B cell (primary cell): ENCODE measurements at regions of chr10 and their contacts with region 1.

Region 1: DNA sequence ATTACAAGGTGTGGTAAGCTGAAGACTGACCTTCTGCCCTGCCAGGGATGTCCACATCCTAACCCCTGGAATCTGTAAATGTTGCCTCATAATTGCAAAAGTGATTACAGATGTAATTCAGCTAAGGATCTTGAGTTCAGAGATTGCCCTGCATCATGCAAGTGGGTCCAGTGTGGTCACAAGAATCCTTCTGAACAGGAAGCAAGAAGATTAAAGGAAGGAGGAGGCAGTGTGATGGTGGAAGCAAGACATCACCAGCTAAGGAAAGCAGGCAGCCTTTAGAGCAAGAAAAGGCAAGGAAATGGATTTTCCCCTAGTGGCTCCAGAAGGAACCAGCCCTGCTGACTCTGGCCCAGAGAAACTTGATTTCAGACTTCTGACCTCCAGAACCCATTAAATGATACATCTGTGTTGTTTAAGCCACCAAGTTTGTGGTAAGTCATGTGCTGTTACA is 78.1 kb downstream of the USP6NL start:
- DNase-seq: peak; percentile 37
- ATAC-seq: no peak
- H3K4me3 ChIP-seq: no peak overlapping the region
- H3K4me3 Mint-ChIP-seq: peak overlapping the region; percentile 80
- H3K27ac ChIP-seq: peak overlapping the region; percentile 14 to 68
- H3K27ac Mint-ChIP-seq: peak overlapping the region; percentile 94
- H3K4me1 ChIP-seq: peaks cover 62 to 66% of the 10 kb centered on the region in 2 donors
- H3K4me1 Mint-ChIP-seq: peaks cover 89% of the 10 kb centered on the region
- H3K27me3 ChIP-seq: no peaks in the 10 kb centered on the region
- H3K27me3 Mint-ChIP-seq: no peaks in the 10 kb centered on the region
- CTCF ChIP-seq: peak; percentile 22

Region 2: DNA sequence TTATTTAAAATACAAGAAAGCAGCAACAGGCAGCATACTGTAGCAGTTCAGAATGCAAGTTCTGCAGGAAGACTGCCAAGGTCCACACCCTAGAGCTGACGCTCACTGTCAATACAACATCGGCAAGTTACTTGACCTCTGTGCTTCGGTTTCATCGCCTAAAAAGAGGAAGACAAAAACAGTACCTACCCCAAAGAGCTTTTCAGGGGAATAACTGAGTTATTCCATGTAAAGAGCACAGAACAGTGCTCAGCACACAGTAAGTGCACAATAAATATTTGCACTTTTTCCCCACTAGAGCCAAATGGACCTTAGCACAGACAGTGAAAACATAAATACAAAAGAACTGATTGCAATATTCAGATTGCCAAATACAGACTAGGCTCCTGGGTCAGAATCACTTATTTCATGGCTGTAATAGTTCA is 10.5 kb before region 1 on chr10:
- CTCF ChIA-PET with region 1: interaction called, 4 read pairs
- POLR2A ChIA-PET with region 1: interaction called, 3 read pairs
- intact Hi-C with region 1: loop called (anchors 1 kb)
- DNase-seq: no peak
- ATAC-seq: peak; percentile 60
- H3K4me3 ChIP-seq: no peak overlapping the region
- H3K4me3 Mint-ChIP-seq: no peak overlapping the region
- H3K27ac ChIP-seq: peak overlapping the region in 1 of 2 donors; percentile 13
- H3K27ac Mint-ChIP-seq: peak overlapping the region; percentile 39
- H3K4me1 ChIP-seq: peaks cover 9 to 20% of the 10 kb centered on the region in 2 donors
- H3K4me1 Mint-ChIP-seq: peaks cover 43% of the 10 kb centered on the region
- H3K27me3 ChIP-seq: no peaks in the 10 kb centered on the region
- H3K27me3 Mint-ChIP-seq: no peaks in the 10 kb centered on the region
- CTCF ChIP-seq: no peak

Region 3: GRCh38 chr10:11551916-11552602 is 18.7 kb after region 1 on chr10:
- CTCF ChIA-PET with region 1: interaction called, 9 read pairs
- POLR2A ChIA-PET with region 1: interaction called, 3 read pairs
- intact Hi-C with region 1: loop called (anchors 1 kb)
- DNase-seq: peak; percentile 31
- ATAC-seq: peak; percentile 46
- H3K4me3 ChIP-seq: no peak overlapping the region
- H3K4me3 Mint-ChIP-seq: peak overlapping the region; percentile 64
- H3K27ac ChIP-seq: peak overlapping the region in 1 of 2 donors; percentile 81
- H3K27ac Mint-ChIP-seq: peak overlapping the region; percentile 83
- H3K4me1 ChIP-seq: peaks cover 69 to 78% of the 10 kb centered on the region in 2 donors
- H3K4me1 Mint-ChIP-seq: peaks cover 82% of the 10 kb centered on the region
- H3K27me3 ChIP-seq: no peaks in the 10 kb centered on the region
- H3K27me3 Mint-ChIP-seq: no peaks in the 10 kb centered on the region
- CTCF ChIP-seq: no peak

Region 4: DNA sequence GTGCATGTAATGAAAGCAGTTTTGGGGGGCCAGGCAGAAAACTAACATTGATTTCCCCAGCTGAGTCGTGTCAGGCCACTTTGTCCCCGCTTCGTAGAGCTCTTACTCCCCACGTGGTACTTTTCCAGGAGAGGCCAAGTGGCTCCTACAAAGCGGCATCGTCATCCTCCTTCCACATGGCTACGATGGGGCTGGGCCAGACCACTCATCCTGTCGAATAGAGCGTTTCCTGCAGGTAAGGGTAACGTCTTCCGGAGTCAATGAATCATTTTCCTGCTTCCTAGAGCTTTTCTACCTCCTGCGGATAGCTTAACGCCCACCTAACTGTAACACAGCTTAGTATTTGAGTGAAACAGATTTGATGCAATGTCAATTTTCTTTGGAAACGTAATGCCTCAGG is 574.4 kb after region 1 on chr10:
- CTCF ChIA-PET with region 1: no interaction called
- POLR2A ChIA-PET with region 1: no interaction called
- intact Hi-C with region 1: no loop called
- DNase-seq: no peak
- ATAC-seq: no peak
- H3K4me3 ChIP-seq: no peak overlapping the region
- H3K4me3 Mint-ChIP-seq: no peak overlapping the region
- H3K27ac ChIP-seq: no peak overlapping the region
- H3K27ac Mint-ChIP-seq: no peak overlapping the region
- H3K4me1 ChIP-seq: peaks cover 14% of the 10 kb centered on the region in 2 donors
- H3K4me1 Mint-ChIP-seq: peaks cover 14% of the 10 kb centered on the region
- H3K27me3 ChIP-seq: no peaks in the 10 kb centered on the region
- H3K27me3 Mint-ChIP-seq: no peaks in the 10 kb centered on the region
- CTCF ChIP-seq: no peak